Colonic mucosa (tissue), 4 donors: ENCODE measurements at regions of chr17 and their contacts with region 1.

Region 1: DNA sequence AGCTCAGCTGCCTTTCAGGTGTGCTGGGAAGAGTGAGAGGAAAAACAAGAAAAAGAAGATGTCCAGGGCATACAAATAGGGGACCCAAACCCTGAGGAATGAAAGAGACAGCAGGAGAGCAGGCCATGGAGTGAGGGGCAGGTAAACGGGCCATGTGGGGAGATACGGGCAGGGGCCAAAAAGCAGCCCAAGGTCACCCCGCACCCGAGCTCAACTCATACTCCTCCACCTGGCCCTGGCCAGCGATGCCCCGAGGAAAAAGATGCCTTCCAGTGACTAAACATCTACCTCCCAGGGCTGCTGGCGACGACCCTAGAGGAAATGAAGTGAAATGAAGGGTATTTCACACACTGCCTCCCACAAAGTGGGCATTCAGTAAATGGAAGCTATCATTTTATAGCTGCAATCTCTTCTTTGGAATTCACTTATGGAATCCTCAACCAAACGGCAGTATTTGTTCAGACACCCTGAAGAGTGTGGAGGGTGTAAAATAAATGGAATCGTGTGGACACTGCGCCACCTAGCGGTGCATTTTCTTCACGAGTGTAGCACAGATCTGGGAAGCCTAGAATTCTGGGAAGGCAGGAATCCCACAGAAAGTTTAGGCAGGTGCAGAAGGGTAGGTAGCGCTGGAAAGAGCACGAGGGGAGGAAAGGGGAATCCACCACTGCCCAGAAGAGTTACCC is 14.9 kb downstream of the ELAC2 start:
- DNase-seq: peak; percentile 80
- H3K4me3 ChIP-seq: no peak overlapping the region
- H3K27ac ChIP-seq: no peak overlapping the region
- H3K4me1 ChIP-seq: no peaks in the 10 kb centered on the region
- H3K27me3 ChIP-seq: no peaks in the 10 kb centered on the region
- CTCF ChIP-seq: peak; percentile 87

Region 2: GRCh38 chr17:12180644-12181261 is 822.2 kb before region 1 on chr17:
- intact Hi-C with region 1: loop called (anchors 5 kb)
- DNase-seq: peak; percentile 39
- H3K4me3 ChIP-seq: no peak overlapping the region
- H3K27ac ChIP-seq: no peak overlapping the region
- H3K4me1 ChIP-seq: no peaks in the 10 kb centered on the region
- H3K27me3 ChIP-seq: no peaks in the 10 kb centered on the region
- CTCF ChIP-seq: peak; percentile 58

Region 3: GRCh38 chr17:12256380-12256995 is 746.4 kb before region 1 on chr17:
- intact Hi-C with region 1: loop called (anchors 10 kb)
- DNase-seq: peak; percentile 35
- H3K4me3 ChIP-seq: no peak overlapping the region
- H3K27ac ChIP-seq: no peak overlapping the region
- H3K4me1 ChIP-seq: no peaks in the 10 kb centered on the region
- H3K27me3 ChIP-seq: no peaks in the 10 kb centered on the region
- CTCF ChIP-seq: peak; percentile 66

Region 4: GRCh38 chr17:12342609-12343435 is 660.1 kb before region 1 on chr17:
- intact Hi-C with region 1: loop called (anchors 5 kb)
- DNase-seq: peak; percentile 60
- H3K4me3 ChIP-seq: no peak overlapping the region
- H3K27ac ChIP-seq: no peak overlapping the region
- H3K4me1 ChIP-seq: no peaks in the 10 kb centered on the region
- H3K27me3 ChIP-seq: no peaks in the 10 kb centered on the region
- CTCF ChIP-seq: peak; percentile 34

Region 5: DNA sequence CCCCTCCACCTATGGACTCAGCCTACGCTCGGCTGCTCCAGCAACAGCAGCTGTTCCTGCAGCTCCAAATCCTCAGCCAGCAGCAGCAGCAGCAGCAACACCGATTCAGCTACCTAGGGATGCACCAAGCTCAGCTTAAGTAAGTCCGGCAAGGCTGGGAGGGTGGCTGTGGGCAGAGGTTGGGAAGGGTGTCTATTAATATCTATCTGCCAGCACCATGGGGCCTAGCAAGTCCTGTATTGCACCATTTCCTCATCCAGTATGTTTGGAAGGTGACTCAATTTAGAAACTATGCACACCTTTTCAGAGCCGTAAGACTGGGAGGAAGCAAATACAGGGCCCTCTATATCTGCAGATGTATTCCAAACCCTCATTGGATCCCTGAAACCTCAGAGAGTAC is 258.6 kb before region 1 on chr17:
- intact Hi-C with region 1: loop called (anchors 10 kb)
- DNase-seq: peak; percentile 17
- H3K4me3 ChIP-seq: no peak overlapping the region
- H3K27ac ChIP-seq: no peak overlapping the region
- H3K4me1 ChIP-seq: peaks cover 4% of the 10 kb centered on the region
- H3K27me3 ChIP-seq: no peaks in the 10 kb centered on the region
- CTCF ChIP-seq: no peak